ENCODE measurements at regions of chr2 and their contacts with region 1.

Region 1: DNA sequence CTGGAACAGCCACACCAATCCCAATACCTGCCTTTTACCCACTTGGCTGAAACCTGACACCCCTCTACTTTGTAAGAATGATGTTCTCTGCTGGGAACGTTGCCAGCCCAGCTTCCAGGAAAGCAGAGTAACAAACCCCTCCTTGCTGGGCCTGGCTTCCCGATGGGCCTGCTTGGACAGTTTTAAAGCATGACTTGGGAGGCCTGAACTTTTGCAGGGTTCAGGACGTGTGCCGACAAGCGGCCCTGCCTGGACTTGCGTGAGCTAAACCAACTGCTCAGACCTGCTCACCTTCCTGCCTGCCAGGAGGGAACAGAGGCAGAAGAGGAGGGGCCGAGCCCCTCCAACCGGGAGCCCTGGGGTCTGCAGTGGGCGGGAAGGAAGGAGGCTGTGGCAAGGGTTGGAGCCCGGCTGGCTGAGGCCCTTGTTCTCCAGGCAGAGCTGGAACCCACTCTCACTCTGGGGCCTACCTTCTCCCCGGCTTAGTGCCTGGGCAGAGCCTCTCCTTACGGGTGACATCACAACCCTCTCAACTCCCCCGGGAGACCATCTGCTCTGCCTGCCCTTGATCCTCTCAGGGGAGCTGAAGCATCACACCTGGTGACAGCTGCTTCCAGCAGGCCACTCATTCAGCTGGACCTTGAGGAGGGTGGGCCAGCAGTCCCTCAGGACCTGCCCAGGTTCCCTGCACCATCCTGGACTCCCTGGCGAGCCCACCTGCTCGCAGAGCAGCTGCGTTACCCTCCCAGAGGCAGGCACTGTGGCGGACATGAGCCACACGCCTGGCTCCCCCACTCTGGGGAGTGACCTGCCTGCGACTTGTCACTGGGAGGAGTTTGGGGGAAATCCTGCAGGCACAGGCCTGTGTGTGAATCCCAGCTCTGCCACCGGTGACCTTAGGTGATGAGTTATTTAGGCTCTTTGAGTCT is 13.2 kb downstream of the HS6ST1 start:
- DNase-seq: no peak
- H3K4me3 ChIP-seq: peak overlapping the region in 1 of 4 experiments; percentile 3; a peak in 1 of 8 replicates
- H3K27ac ChIP-seq: peak overlapping the region; percentile 14; the same call in 1 of the 2 replicates
- H3K4me1 ChIP-seq: peaks cover 0 to 43% (median 25%) of the 10 kb centered on the region in 4 experiments; a peak in 6 of 7 replicates
- H3K27me3 ChIP-seq: no peaks in the 10 kb centered on the region
- CTCF ChIP-seq: no peak
- EP300 ChIP-seq: peak in 1 of 2 experiments; percentile 86; a peak in 1 of 3 replicates
- POLR2A ChIP-seq: no peak
- RAD21 ChIP-seq: no peak

Region 2: GRCh38 chr2:128260239-128261138 is 44.9 kb before region 1 on chr2:
- CTCF ChIA-PET with region 1: interaction called, 11 read pairs
- POLR2A ChIA-PET with region 1: no interaction called
- DNase-seq: peak; percentile 58 to 81
- H3K4me3 ChIP-seq: peak overlapping the region in 1 of 4 experiments; percentile 7; a peak in 1 of 8 replicates
- H3K27ac ChIP-seq: peak overlapping the region; percentile 77
- H3K4me1 ChIP-seq: peaks cover 10 to 23% (median 14%) of the 10 kb centered on the region in 4 experiments
- H3K27me3 ChIP-seq: no peaks in the 10 kb centered on the region
- CTCF ChIP-seq: peak in 1 of 3 experiments; percentile 5; a peak in 1 of 4 replicates
- EP300 ChIP-seq: no peak
- POLR2A ChIP-seq: no peak; a peak in 1 of 3 replicates
- RAD21 ChIP-seq: 0 out of 4 replicates have a peak, but pooled peaks of 1 of the 2 experiments have one; percentile 3

Region 3: GRCh38 chr2:128321784-128322714 is 16.6 kb after region 1 on chr2:
- CTCF ChIA-PET with region 1: interaction called, 17 read pairs
- POLR2A ChIA-PET with region 1: interaction called, 5 read pairs
- DNase-seq: peak; percentile 33 to 93
- H3K4me3 ChIP-seq: peak overlapping the region; percentile 33 to 62 (median 45)
- H3K27ac ChIP-seq: peak overlapping the region; percentile 56; the same call in 1 of the 2 replicates
- H3K4me1 ChIP-seq: peaks cover 2 to 23% (median 13%) of the 10 kb centered on the region in 4 experiments
- H3K27me3 ChIP-seq: peaks cover 0 to 23% (median 16%) of the 10 kb centered on the region in 4 experiments; a peak in 5 of 7 replicates
- CTCF ChIP-seq: peak in 2 of 3 experiments; percentile 84 to 94; a peak in 3 of 4 replicates
- EP300 ChIP-seq: peak in 1 of 2 experiments; percentile 90; a peak in 1 of 3 replicates
- POLR2A ChIP-seq: 0 out of 3 replicates have a peak, but pooled peaks of 1 of the 2 experiments have one; percentile 54
- RAD21 ChIP-seq: peak; percentile 76 to 93

Measured in H1 (cell line).